ENCODE measurements at regions of chr9 and their contacts with region 1.

Region 1: DNA sequence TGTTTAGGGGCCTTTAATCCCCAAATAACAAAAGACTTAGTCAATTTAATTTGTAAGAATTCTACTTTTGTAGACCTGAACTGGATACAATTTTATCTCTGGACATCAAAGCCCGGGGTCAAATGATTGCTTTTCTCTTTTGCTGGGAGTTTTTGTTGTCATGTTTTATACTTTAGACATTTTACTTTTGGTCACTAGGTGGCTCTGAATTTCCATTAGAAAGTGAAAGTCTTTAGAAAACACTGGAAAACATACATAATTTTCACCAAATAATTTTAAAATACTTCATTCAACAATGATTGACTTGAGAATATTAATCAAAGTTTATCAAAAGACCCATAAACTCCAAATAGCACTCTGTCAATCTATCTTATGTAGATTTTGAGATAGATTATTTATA is 2.8 kb upstream of the PCA3 start:
- DNase-seq: no peak

Region 2: GRCh38 chr9:77149879-77150278 is 388.4 kb after region 1 on chr9:
- intact Hi-C with region 1: loop called (anchors 5 kb)
- DNase-seq: no peak

Measured in posterior cingulate gyrus (tissue), 11 donors.